Activated B cell treated with CpG ODN at 0.5 μM for 24 hours (primary cell): ENCODE measurements at regions of chr17 and their contacts with region 1.

Region 1: DNA sequence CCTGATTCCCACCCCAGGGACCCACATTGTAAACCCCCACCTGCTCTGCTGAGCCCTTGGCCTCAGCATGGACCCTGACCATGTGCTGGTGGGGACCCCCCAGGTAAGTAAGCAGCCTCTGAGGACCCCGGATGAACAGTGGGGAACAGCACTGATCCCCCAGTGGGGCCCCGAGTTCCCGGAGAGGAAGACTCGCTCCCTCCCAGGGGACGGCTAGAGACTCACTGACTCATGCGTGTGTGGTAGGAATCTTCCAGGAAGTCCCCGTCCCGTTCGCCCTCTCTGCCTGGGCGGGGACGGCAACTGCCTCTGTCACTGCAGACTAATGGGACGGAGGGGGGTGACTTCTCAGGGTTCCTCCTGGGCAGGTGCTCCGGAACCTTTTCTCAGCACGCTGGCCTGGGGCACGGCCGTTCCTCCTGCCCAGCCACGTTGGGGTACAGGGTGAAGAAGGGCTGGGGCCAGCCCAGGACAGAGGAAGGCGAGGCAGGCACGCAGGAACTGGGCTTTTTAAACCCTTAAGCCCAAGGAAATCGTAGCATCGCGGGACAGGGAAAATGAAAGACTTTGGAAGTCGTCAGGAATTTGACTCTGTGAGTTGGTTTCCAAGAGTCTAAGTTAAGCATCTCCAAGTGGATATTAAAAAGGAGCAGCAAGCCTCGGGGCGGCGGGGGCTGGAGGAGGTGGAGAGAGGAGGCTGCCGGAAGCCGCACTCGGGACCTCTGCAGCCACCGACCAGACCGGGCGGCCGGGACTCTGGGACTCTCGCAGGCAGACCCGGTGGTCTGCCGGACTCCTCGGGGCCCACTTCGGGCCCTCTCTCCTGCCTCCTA is 178.7 kb downstream of the SEC14L1 start:
- DNase-seq: peak; percentile 68
- ATAC-seq: peak; percentile 41
- H3K4me3 Mint-ChIP-seq: peak overlapping the region; percentile 92
- H3K27ac Mint-ChIP-seq: peak overlapping the region; percentile 89
- H3K4me1 Mint-ChIP-seq: peaks cover 76% of the 10 kb centered on the region
- H3K27me3 Mint-ChIP-seq: no peaks in the 10 kb centered on the region
- CTCF ChIP-seq: no peak

Region 2: GRCh38 chr17:77088455-77089123 is 230.8 kb before region 1 on chr17:
- CTCF ChIA-PET with region 1: no interaction called
- POLR2A ChIA-PET with region 1: interaction called, 10 read pairs
- intact Hi-C with region 1: no loop called
- DNase-seq: peak; percentile 84
- ATAC-seq: peak; percentile 89
- H3K4me3 Mint-ChIP-seq: peak overlapping the region; percentile 95
- H3K27ac Mint-ChIP-seq: peak overlapping the region; percentile 95
- H3K4me1 Mint-ChIP-seq: peaks cover 52% of the 10 kb centered on the region
- H3K27me3 Mint-ChIP-seq: peaks cover 3% of the 10 kb centered on the region
- CTCF ChIP-seq: no peak

Region 3: GRCh38 chr17:77331301-77331864 is 12.0 kb after region 1 on chr17:
- CTCF ChIA-PET with region 1: no interaction called
- POLR2A ChIA-PET with region 1: interaction called, 10 read pairs
- intact Hi-C with region 1: no loop called
- DNase-seq: peak; percentile 90
- ATAC-seq: peak; percentile 91
- H3K4me3 Mint-ChIP-seq: peak overlapping the region; percentile 76
- H3K27ac Mint-ChIP-seq: peak overlapping the region; percentile 78
- H3K4me1 Mint-ChIP-seq: peaks cover 57% of the 10 kb centered on the region
- H3K27me3 Mint-ChIP-seq: no peaks in the 10 kb centered on the region
- CTCF ChIP-seq: peak; percentile 32

Region 4: GRCh38 chr17:77418609-77419008 is 99.2 kb after region 1 on chr17:
- CTCF ChIA-PET with region 1: no interaction called
- POLR2A ChIA-PET with region 1: no interaction called
- intact Hi-C with region 1: no loop called
- DNase-seq: no peak
- ATAC-seq: no peak
- H3K4me3 Mint-ChIP-seq: no peak overlapping the region
- H3K27ac Mint-ChIP-seq: no peak overlapping the region
- H3K4me1 Mint-ChIP-seq: peaks cover 24% of the 10 kb centered on the region
- H3K27me3 Mint-ChIP-seq: no peaks in the 10 kb centered on the region
- CTCF ChIP-seq: no peak

Region 5: DNA sequence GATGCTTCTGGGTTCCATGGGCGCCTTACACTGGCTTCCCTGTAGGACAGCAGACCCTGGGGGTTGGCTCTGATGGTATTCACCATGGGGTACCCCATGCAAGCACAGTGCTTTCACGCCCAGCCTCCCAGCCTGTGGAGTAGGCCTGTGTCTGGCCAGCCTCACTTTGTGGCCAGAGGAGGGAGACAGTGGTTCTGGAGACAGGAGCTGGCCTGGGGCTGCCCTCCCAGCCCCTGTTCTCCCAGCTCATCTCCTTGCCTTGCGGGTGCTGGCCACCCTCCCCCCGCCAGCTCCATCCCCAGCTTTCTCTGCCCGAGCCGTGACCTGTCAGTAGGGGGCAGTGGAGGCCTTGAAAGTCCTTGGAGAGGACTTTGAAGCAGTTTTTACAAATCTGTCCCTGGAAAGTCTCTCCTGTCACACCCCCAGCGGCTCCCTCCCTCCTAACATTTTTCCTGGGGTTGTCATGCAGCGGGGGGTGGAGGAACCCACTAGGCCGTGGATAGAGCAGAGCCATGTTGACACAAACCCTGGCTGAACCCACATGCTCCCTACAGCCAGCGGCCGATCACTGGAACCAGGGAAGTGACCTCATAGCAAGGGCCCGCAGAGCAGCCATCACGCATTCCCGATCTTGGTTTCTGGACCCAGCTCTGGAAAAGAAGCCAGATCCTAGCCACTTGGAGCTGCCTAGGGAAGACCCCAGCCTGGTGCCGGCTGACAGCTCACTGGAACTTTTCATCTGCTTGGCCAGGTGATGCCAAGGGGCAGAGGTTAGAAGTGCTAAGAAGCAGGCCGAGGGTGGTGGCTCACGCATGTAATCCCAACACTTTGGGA is 110.7 kb after region 1 on chr17:
- CTCF ChIA-PET with region 1: interaction called, 8 read pairs
- POLR2A ChIA-PET with region 1: interaction called, 13 read pairs
- intact Hi-C with region 1: no loop called
- DNase-seq: peak; percentile 67
- ATAC-seq: peak; percentile 37
- H3K4me3 Mint-ChIP-seq: no peak overlapping the region
- H3K27ac Mint-ChIP-seq: peak overlapping the region; percentile 63
- H3K4me1 Mint-ChIP-seq: peaks cover 96% of the 10 kb centered on the region
- H3K27me3 Mint-ChIP-seq: no peaks in the 10 kb centered on the region
- CTCF ChIP-seq: no peak

Region 6: GRCh38 chr17:77451245-77451893 is 131.9 kb after region 1 on chr17:
- CTCF ChIA-PET with region 1: no interaction called
- POLR2A ChIA-PET with region 1: interaction called, 87 read pairs
- intact Hi-C with region 1: no loop called
- DNase-seq: peak; percentile 65
- ATAC-seq: peak; percentile 59
- H3K4me3 Mint-ChIP-seq: peak overlapping the region; percentile 95
- H3K27ac Mint-ChIP-seq: peak overlapping the region; percentile 99
- H3K4me1 Mint-ChIP-seq: peaks cover 82% of the 10 kb centered on the region
- H3K27me3 Mint-ChIP-seq: no peaks in the 10 kb centered on the region
- CTCF ChIP-seq: no peak

Region 7: GRCh38 chr17:77701996-77702395 is 382.6 kb after region 1 on chr17:
- CTCF ChIA-PET with region 1: no interaction called
- POLR2A ChIA-PET with region 1: no interaction called
- intact Hi-C with region 1: no loop called
- DNase-seq: no peak
- ATAC-seq: no peak
- H3K4me3 Mint-ChIP-seq: no peak overlapping the region
- H3K27ac Mint-ChIP-seq: no peak overlapping the region
- H3K4me1 Mint-ChIP-seq: no peaks in the 10 kb centered on the region
- H3K27me3 Mint-ChIP-seq: peaks cover 22% of the 10 kb centered on the region
- CTCF ChIP-seq: no peak

Region 8: DNA sequence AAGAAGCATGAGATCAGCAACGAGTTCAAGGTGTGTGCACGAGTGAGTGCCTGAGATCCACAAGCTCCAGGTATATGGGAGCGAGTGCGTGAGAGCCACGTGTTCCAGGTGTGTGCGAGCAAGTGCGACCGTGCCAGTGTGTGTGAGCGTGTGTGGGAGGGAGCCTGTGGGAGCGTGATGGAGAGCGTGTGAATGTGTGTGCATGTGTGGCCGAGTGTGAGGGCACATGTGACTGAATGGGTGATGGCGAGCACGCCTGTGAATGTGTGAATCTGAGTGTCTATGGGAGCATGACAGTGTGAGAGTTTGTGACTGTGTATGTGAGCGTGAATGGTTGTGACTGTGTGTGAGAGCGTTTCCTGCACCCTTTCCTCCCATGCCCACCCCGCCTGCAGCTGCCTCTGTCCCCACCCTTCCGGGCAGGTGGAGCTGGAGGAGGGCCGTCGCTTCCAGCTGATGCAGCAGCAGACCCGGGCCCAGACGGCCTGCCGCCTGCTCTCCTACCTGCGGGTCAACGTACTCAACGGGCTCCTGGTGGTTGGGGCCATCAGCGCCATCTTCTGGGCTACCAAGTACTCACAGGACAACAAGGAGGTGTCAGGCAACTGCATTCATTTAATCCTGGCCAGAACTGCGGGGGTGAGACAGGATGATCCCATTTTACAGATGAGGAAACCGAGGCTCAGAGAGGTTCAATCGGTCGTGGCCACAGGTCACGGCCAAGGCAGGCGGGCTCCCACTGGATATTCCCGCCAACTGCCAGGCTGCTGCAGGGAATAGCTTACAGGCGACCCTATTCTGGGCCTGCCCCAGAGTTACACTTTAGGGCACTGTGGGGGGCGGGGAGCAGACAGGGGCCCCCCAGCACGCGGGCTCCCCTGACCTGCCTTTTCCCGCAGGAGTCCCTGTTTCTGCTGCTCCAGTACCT is 814.8 kb after region 1 on chr17:
- CTCF ChIA-PET with region 1: no interaction called
- POLR2A ChIA-PET with region 1: interaction called, 3 read pairs
- intact Hi-C with region 1: loop called (anchors 5 kb)
- DNase-seq: peak; percentile 59
- ATAC-seq: peak; percentile 15
- H3K4me3 Mint-ChIP-seq: peak overlapping the region; percentile 95
- H3K27ac Mint-ChIP-seq: peak overlapping the region; percentile 81
- H3K4me1 Mint-ChIP-seq: peaks cover 87% of the 10 kb centered on the region
- H3K27me3 Mint-ChIP-seq: no peaks in the 10 kb centered on the region
- CTCF ChIP-seq: peak; percentile 69